SK-N-SH (cell line): ENCODE measurements at regions of chr7 and their contacts with region 1.

Region 1: GRCh38 chr7:91953618-91954017 is 13.0 kb downstream of the AKAP9 start:
- DNase-seq: peak; percentile 20
- H3K4me3 ChIP-seq: no peak overlapping the region
- H3K27ac ChIP-seq: no peak overlapping the region
- H3K4me1 ChIP-seq: no peaks in the 10 kb centered on the region; a peak in 1 of 4 replicates
- H3K27me3 ChIP-seq: no peaks in the 10 kb centered on the region
- CTCF ChIP-seq: peak; percentile 65
- EP300 ChIP-seq: no peak
- RAD21 ChIP-seq: no peak; the same call in 1 of the 2 replicates

Region 2: GRCh38 chr7:90877201-90877600 is 1076.4 kb before region 1 on chr7:
- CTCF ChIA-PET with region 1: no interaction called
- POLR2A ChIA-PET with region 1: no interaction called
- DNase-seq: no peak
- H3K4me3 ChIP-seq: no peak overlapping the region
- H3K27ac ChIP-seq: no peak overlapping the region
- H3K4me1 ChIP-seq: no peaks in the 10 kb centered on the region
- H3K27me3 ChIP-seq: no peaks in the 10 kb centered on the region
- CTCF ChIP-seq: no peak
- EP300 ChIP-seq: no peak
- RAD21 ChIP-seq: no peak

Region 3: DNA sequence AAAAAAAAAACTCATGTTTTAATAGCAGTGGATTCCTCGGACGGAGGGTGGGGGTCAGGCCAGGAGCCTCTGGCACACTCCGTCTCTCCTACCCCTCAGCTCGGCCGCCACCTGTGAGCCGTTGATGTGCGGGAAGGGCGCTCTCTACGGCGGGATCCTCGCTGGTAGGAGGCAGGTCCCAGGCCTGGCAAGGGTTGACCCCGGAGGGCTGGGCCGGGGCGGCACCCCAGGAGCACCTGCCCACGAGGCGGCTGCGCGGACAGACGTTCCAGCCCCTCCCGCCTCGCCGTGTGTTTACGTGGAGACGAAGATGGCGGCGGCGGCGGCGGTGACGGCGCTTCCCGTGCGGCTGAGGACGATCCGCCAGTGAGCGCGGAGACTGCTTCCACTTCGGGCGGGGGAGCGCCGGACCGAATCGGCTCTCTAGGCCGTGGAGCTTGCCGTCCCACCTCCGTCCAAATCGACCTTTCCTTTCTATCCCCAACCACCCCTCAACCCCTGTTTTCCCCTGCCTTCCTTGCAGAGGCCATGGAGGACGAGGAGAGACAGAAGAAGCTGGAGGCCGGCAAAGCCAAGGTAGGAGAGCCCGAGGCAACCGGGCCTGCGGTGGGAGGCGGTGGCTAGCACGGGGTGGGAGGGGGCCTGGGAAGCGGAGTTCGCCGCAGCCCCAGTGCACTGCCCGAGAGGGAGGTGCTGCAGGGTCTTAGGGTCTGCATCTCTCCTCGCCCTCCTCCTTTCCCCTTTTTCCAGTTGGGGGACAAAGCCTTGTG is 12.9 kb before region 1 on chr7 and contains the start of gene AKAP9:
- CTCF ChIA-PET with region 1: interaction called, 15 read pairs
- POLR2A ChIA-PET with region 1: interaction called, 3 read pairs
- DNase-seq: peak; percentile 93
- H3K4me3 ChIP-seq: peak within 1 kb of the TSS; percentile 77 to 95
- H3K27ac ChIP-seq: peak within 1 kb of the TSS; percentile 89 to 95
- H3K4me1 ChIP-seq: peaks cover 8 to 9% of the 10 kb centered on the region in 2 experiments; a peak in 3 of 4 replicates
- H3K27me3 ChIP-seq: no peaks in the 10 kb centered on the region
- CTCF ChIP-seq: no peak
- EP300 ChIP-seq: no peak
- RAD21 ChIP-seq: no peak
- polyA plus RNA-seq, gene AKAP9: 13.1 and 16.7 TPM in 2 replicates